Ovary (tissue), 10 donors: ENCODE measurements at regions of chr5 and their contacts with region 1.

Region 1: GRCh38 chr5:179732417-179732917 is at the start of gene MAML1:
- DNase-seq: peak; percentile 99 to 100 (median 100)
- H3K4me3 ChIP-seq: peak within 1 kb of the TSS; percentile 83
- H3K27ac ChIP-seq: peak within 1 kb of the TSS; percentile 85 to 87
- H3K4me1 ChIP-seq: peaks cover 13% of the 10 kb centered on the region
- H3K27me3 ChIP-seq: no peaks in the 10 kb centered on the region
- CTCF ChIP-seq: no peak
- EP300 ChIP-seq: no peak
- POLR2A ChIP-seq: peak; percentile 45
- total RNA-seq, gene MAML1: 18.4 to 40.1 (median 33.6) TPM

Region 2: DNA sequence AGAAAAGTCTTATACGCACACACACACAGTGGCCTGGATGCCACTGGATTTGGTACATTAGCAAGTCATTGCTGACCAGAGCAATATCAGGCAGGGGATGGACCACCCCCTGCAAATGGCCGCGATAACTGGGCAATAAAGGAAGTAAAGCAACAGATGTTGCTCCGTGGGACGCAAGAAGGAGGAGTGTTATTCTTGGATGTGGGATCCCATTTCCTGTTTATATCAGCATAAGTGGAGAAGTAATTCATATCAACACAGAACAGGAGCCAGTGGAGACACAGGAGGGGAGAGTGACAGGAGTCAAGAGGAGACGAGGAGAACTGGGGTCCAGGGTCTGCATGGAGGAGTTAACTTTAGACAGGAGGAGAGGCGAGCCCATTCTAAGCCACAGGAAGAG is 163.7 kb before region 1 on chr5:
- intact Hi-C with region 1: no loop called
- DNase-seq: no peak
- H3K4me3 ChIP-seq: no peak overlapping the region
- H3K27ac ChIP-seq: no peak overlapping the region
- H3K4me1 ChIP-seq: no peaks in the 10 kb centered on the region
- H3K27me3 ChIP-seq: no peaks in the 10 kb centered on the region
- CTCF ChIP-seq: no peak
- EP300 ChIP-seq: no peak
- POLR2A ChIP-seq: no peak

Region 3: DNA sequence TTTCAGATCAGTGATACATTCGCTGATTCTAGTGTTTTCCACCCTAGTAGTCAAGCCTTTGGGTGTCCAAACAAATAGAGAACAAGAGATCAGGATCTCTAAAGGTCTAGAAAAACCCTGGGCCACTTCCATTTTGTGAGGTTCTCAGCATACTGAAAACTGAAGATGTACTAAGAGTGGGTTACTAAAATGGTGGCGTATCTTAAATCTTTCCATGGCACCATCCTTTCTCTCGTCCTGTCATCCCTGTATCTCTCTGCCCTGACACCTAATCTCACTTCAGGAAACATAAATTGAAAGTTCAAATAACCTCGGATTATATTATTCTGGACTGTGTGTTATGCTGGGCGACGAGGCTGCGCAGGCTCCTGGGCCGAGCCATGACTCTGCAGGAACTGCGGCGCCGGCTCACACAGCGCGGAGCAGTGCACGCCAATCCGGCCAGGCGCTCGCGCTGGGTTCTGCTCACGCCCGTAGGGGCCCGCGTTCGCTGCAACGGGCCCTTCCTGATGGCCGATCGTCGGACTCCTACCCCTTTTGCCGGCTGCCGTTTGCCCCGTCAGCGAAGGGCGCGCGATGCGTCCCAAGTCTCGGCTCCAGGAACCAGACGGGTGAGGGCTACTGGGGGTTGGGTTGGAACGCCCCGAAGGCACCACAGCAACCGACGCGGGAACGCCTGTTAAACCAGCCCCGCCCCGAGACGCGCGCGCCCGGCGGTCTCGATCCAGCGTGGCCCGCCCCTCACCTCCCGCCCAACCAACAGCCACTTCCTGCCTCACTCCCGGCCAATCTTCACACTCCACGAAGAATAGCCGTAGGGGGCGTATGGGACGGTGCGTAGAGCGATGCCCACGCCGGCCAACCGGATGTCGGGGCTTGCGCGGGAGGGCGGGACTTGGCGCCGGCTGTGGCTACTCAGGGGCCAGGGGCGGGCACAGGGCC is 34.2 kb before region 1 on chr5:
- intact Hi-C with region 1: loop called in 1 of 4 experiments (anchors 2 kb)
- DNase-seq: peak; percentile 98 to 99 (median 99)
- H3K4me3 ChIP-seq: peak overlapping the region; percentile 91
- H3K27ac ChIP-seq: peak overlapping the region; percentile 22 to 94
- H3K4me1 ChIP-seq: peaks cover 9% of the 10 kb centered on the region
- H3K27me3 ChIP-seq: no peaks in the 10 kb centered on the region
- CTCF ChIP-seq: peak in 1 of 3 donors; percentile 13
- EP300 ChIP-seq: no peak
- POLR2A ChIP-seq: peak; percentile 71